ENCODE measurements at regions of chr4 and their contacts with region 1.

Region 1: DNA sequence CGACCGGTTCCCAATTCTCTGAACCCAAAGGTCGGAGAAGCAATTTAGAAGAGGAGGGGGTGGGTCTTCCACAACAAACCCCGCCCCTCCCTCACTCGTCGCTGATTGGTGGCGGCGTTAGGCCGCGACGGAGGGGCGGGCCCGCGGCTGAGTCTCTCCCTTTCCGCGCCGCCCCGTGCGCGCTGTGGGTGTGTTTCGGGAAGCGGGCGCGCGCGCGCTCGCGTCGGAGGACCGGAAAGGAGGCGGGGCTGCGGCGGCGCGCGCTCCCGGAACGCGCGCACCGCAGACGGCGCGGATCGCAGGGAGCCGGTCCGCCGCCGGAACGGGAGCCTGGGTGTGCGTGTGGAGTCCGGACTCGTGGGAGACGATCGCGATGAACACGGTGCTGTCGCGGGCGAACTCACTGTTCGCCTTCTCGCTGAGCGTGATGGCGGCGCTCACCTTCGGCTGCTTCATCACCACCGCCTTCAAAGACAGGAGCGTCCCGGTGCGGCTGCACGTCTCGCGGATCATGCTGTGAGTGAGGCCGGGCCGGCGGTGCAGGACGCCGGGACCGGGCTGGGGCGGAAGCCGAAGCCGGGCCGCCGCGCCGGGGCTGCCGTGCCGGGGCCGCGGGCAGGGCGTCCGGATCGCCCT is at the start of gene SPCS3:
- DNase-seq: peak; percentile 99
- H3K4me3 Mint-ChIP-seq: peak within 1 kb of the TSS; percentile 85
- H3K27ac Mint-ChIP-seq: peak within 1 kb of the TSS; percentile 92
- H3K4me1 Mint-ChIP-seq: peaks cover 28% of the 10 kb centered on the region
- H3K27me3 Mint-ChIP-seq: no peaks in the 10 kb centered on the region
- total RNA-seq, gene SPCS3: 186 and 200 TPM in 2 replicates

Region 2: DNA sequence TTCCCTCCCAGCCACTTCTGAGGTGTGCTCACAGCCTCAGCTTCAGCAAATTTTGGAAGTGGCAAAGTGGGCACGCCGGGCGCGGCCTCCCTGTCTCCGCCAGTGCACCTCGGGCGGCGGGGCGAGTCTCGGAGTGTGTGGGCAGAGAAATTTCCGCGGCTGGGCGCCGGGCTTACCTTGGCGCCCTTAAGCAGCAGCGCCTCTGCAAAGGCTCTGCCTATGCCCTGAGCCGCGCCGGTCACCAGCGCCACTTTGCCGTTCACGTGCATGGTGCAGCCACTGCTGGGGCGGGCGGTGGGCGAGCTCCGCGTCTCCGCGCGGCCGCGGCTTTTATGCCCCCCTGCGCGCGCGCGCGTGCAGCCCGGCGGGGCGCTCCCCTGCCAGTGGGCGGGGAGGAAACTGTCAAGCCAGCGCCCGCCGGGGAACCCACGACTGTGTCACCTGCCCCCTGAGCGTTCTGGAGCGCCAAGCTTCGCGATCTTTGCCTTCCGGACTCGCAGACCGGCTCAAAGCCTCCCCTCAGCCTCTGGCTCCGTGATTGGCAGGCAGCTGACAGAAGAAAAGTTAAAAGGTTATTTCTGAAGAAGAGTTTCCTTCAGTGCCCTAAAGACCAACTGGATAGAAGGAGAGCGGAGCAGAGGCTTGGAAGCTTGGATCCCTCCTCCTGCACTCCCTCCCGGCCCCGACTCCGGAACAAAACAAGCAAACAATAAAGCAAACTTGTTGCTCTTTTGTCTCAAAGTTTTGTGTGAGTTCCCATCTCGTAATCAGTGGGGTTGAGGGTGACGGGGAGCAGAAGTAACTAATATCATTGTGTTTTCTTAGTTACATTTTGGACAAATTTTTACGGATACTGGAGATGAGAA is 1797.4 kb before region 1 on chr4 and contains the start of gene HPGD:
- intact Hi-C with region 1: loop called (anchors 5 kb)
- DNase-seq: peak; percentile 87
- H3K4me3 Mint-ChIP-seq: peak within 1 kb of the TSS; percentile 82
- H3K27ac Mint-ChIP-seq: peak within 1 kb of the TSS; percentile 38
- H3K4me1 Mint-ChIP-seq: peaks cover 12% of the 10 kb centered on the region
- H3K27me3 Mint-ChIP-seq: peaks cover 45% of the 10 kb centered on the region
- total RNA-seq, gene HPGD: 1.1 and 1.4 TPM in 2 replicates

Region 3: GRCh38 chr4:176065435-176066291 is 254.2 kb before region 1 on chr4 and contains the start of gene WDR17:
- intact Hi-C with region 1: loop called (anchors 5 kb)
- DNase-seq: peak; percentile 92
- H3K4me3 Mint-ChIP-seq: peak within 1 kb of the TSS; percentile 90
- H3K27ac Mint-ChIP-seq: peak within 1 kb of the TSS; percentile 45
- H3K4me1 Mint-ChIP-seq: peaks cover 11% of the 10 kb centered on the region
- H3K27me3 Mint-ChIP-seq: peaks cover 21% of the 10 kb centered on the region
- total RNA-seq, gene WDR17: 1.7 and 2.1 TPM in 2 replicates

Region 4: GRCh38 chr4:176277162-176277904 is 42.5 kb before region 1 on chr4:
- intact Hi-C with region 1: no loop called
- DNase-seq: peak; percentile 61
- H3K4me3 Mint-ChIP-seq: no peak overlapping the region
- H3K27ac Mint-ChIP-seq: no peak overlapping the region
- H3K4me1 Mint-ChIP-seq: no peaks in the 10 kb centered on the region
- H3K27me3 Mint-ChIP-seq: peaks cover 3% of the 10 kb centered on the region

Region 5: DNA sequence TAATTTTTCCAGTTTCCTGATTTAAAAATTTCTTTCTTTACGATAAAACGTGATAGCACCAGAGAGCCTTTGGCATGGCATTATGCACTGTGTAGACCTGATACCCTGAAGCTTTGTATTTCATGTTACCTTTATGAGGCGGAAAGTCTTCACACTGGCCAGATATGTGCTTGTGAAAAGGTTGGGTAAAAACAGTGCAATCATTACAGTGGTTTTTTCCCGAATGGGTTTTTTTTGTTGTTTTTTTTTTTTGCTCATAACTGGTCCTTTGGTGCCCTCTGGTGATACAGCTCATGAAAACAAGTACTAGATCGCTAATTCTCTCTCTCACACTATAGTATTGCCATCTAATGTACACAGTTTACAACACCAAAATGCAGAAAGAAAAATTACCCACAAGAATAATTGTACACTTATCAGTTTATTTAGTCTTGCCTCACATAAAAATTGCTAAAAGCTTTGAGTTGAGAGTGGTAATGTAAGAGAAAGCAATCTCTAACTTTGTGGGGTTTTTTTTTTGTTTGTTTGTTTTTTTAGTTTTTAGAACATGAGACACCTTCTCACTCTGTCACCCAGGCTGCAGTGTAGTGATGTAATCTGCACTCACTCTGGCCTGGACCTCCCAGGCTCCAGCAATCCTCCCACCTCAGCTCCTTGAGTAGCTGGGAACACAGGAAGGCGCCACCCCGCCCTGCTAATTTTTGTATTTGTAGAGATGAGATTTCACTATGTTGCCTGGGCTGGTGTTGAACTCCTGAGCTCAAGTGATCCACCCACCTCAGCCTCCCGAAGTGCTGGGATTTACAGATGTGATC is 21.3 kb after region 1 on chr4:
- intact Hi-C with region 1: loop called (anchors 2 kb)
- DNase-seq: no peak
- H3K4me3 Mint-ChIP-seq: no peak overlapping the region
- H3K27ac Mint-ChIP-seq: no peak overlapping the region
- H3K4me1 Mint-ChIP-seq: no peaks in the 10 kb centered on the region
- H3K27me3 Mint-ChIP-seq: no peaks in the 10 kb centered on the region

Region 6: GRCh38 chr4:176902710-176903323 is 583.0 kb after region 1 on chr4:
- intact Hi-C with region 1: loop called (anchors 5 kb)
- DNase-seq: peak; percentile 60
- H3K4me3 Mint-ChIP-seq: peak overlapping the region; percentile 34
- H3K27ac Mint-ChIP-seq: peak overlapping the region; percentile 49
- H3K4me1 Mint-ChIP-seq: peaks cover 10% of the 10 kb centered on the region
- H3K27me3 Mint-ChIP-seq: peaks cover 8% of the 10 kb centered on the region

Region 7: GRCh38 chr4:177441803-177442622 is 1122.2 kb after region 1 on chr4 and contains the start of gene AGA:
- intact Hi-C with region 1: loop called (anchors 1 kb)
- DNase-seq: peak; percentile 98
- H3K4me3 Mint-ChIP-seq: peak within 1 kb of the TSS; percentile 95
- H3K27ac Mint-ChIP-seq: peak within 1 kb of the TSS; percentile 97
- H3K4me1 Mint-ChIP-seq: peaks cover 27% of the 10 kb centered on the region
- H3K27me3 Mint-ChIP-seq: no peaks in the 10 kb centered on the region
- total RNA-seq, gene AGA: 15.1 and 15.6 TPM in 2 replicates